Cardiac septum (tissue), 1 donor: ENCODE measurements at regions of chr1 and their contacts with region 1.

Region 1: GRCh38 chr1:225652729-225653462 is at the start of gene ENAH:
- DNase-seq: peak; percentile 89
- total RNA-seq, gene ENAH: 195 TPM

Region 2: DNA sequence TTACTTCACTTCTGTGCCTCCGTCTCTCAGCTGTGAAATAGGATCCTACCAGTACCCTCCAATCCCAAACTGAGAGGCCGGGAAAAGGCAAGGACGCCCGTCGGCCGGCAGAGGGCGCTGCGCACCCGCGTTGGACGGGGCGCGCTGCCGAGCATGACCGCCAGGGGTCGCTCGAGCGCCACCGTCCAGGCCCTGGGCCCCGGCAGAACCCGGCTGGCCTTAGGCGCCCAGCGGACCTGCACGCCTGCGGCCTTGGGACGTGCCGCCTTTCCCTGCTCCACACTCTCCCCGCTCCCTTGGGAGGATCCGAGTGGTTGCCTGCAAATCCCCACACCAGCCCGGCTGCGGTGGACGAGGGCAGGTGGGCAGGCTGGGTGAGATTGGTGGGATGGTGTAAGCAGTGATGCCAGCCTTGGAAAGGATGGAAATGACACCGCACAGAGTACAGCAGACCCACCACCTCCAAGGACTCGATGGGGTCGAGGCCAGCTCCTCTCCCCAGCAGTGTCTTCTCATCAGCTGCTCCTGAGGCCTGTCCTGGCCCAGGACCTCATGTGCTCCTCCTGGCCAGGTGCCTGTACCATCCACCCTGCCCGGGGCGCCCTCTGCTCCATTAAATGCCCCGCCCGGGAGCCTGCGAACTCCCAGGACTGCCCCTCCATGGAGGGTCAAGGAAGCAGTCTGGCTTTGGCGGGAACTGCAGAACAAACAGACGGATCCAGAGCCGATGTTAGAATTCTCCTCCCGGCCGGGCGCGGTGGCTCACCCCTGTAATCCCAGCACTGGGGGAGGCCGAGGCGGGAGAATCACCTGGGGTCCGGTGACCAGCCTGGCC is 177.7 kb before region 1 on chr1:
- intact Hi-C with region 1: loop called (anchors 5 kb)
- DNase-seq: peak; percentile 93

Region 3: DNA sequence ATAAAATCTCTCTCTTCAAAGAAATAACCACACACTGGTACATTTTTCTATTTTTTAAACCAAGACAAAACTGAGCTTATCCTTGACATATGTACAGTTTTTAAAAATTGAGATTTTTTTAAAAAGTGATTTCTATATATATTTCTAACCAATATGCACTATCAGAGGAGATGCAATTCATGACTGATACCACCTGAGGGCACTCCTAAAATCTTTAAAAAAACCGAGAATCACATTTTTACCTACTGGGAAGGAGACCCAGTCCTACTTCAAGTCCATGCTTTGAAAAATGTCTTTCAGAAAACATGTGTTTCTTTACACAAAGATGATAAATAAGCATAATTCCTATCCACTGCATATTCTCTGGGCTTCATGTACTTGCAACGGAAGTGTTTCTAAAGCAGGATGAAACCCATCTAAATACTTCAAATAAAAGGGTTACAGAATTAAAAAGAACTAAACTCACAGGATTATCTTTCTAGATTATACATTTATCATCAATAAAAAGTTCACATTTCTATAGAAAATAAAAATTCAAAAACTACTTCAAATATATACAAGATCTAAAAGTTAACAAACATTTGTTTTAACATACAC is 98.6 kb before region 1 on chr1:
- intact Hi-C with region 1: loop called (anchors 5 kb)
- DNase-seq: no peak

Region 4: GRCh38 chr1:225580238-225581099 is 72.4 kb before region 1 on chr1:
- intact Hi-C with region 1: loop called (anchors 5 kb)
- DNase-seq: no peak

Region 5: DNA sequence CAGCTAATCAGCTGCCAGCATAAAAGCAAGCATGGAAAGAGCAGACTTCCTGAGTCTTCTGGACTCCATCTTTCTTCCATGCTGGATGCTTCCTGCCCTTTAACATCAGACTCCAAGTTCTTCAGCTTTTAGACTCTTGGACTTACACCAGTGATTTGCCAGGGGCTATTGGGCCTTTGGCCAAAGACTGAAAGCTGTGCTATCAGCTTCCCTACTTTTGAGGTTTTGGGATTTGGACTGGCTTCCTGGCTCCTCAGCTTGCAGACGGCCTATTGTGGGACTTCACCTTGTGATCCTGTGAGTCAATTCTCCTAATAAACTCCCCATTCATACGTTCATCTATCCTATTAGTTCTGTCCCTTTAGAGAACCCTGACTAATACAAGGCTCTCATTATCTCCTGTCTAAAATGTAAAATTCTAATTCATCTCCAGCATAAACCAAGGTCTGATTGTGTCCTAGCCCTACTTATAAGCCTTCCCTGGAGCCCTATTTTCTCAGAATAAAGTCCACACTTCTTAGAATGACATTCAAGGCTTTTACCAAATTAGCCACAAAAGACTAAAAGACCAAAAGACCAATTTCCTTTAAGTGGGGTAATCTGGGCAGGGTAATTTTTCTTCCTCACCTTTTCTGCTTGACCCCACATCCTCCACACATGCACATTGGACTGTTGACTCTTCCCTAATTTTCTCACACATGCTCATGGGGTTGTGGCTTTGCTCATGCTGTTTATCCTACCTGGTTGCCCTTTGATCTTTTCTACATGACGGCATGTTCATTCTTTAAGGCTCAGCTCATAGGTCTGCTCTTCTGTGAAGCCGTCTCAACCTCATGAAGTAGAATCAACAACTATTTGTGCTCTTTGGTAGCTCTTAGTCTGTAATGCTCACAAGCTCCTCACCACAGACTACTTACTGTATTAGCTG is 18.2 kb after region 1 on chr1:
- intact Hi-C with region 1: no loop called
- DNase-seq: no peak

Region 6: GRCh38 chr1:225766967-225767633 is 114.2 kb after region 1 on chr1:
- intact Hi-C with region 1: loop called (anchors 5 kb)
- DNase-seq: no peak

Region 7: GRCh38 chr1:225999227-225999911 is 346.5 kb after region 1 on chr1 and contains the start of gene SDE2:
- intact Hi-C with region 1: loop called (anchors 5 kb)
- DNase-seq: peak; percentile 100
- total RNA-seq, gene SDE2: 14.6 TPM